ENCODE measurements at regions of chr1 and their contacts with region 1.

Region 1: GRCh38 chr1:242467556-242468145 is 56.8 kb downstream of the PLD5 start:
- DNase-seq: peak; percentile 50
- H3K4me3 ChIP-seq: no peak overlapping the region
- H3K27ac ChIP-seq: no peak overlapping the region
- H3K4me1 ChIP-seq: no peaks in the 10 kb centered on the region
- H3K27me3 ChIP-seq: no peaks in the 10 kb centered on the region
- CTCF ChIP-seq: peak; percentile 81 to 82

Region 2: GRCh38 chr1:242402956-242403355 is 64.7 kb before region 1 on chr1:
- CTCF ChIA-PET with region 1: no interaction called
- dilution Hi-C with region 1: no loop called
- in situ Hi-C with region 1: no loop called
- intact Hi-C with region 1: no loop called
- DNase-seq: no peak
- H3K4me3 ChIP-seq: no peak overlapping the region
- H3K27ac ChIP-seq: no peak overlapping the region
- H3K4me1 ChIP-seq: no peaks in the 10 kb centered on the region
- H3K27me3 ChIP-seq: no peaks in the 10 kb centered on the region
- CTCF ChIP-seq: no peak

Region 3: DNA sequence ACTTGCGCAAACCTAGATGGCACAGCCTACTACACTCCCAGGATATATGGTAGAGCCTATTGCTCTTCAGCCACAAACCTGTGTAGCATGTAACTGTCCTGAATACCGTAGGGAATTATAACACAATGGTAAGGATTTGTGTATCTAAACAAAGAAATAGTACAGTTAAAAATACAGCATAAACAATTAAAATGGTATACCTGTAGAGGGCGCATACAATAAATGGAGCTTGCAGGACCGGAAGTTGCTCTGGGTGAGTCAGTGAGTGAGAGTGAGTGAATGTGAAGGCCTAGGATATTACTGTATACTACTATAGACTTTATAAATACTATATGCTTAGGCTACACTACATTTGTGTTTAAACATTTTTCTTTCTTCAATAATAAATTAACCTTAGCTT is 42.4 kb before region 1 on chr1:
- CTCF ChIA-PET with region 1: no interaction called
- dilution Hi-C with region 1: no loop called
- in situ Hi-C with region 1: no loop called
- intact Hi-C with region 1: no loop called
- DNase-seq: peak; percentile 48
- H3K4me3 ChIP-seq: no peak overlapping the region
- H3K27ac ChIP-seq: no peak overlapping the region
- H3K4me1 ChIP-seq: peaks cover 12% of the 10 kb centered on the region
- H3K27me3 ChIP-seq: no peaks in the 10 kb centered on the region
- CTCF ChIP-seq: peak; percentile 18 to 34

Region 4: GRCh38 chr1:242641461-242641860 is 173.8 kb after region 1 on chr1:
- CTCF ChIA-PET with region 1: no interaction called
- dilution Hi-C with region 1: no loop called
- in situ Hi-C with region 1: no loop called
- intact Hi-C with region 1: loop called (anchors 1 kb)
- DNase-seq: no peak
- H3K4me3 ChIP-seq: no peak overlapping the region
- H3K27ac ChIP-seq: no peak overlapping the region
- H3K4me1 ChIP-seq: no peaks in the 10 kb centered on the region
- H3K27me3 ChIP-seq: no peaks in the 10 kb centered on the region
- CTCF ChIP-seq: no peak

Region 5: DNA sequence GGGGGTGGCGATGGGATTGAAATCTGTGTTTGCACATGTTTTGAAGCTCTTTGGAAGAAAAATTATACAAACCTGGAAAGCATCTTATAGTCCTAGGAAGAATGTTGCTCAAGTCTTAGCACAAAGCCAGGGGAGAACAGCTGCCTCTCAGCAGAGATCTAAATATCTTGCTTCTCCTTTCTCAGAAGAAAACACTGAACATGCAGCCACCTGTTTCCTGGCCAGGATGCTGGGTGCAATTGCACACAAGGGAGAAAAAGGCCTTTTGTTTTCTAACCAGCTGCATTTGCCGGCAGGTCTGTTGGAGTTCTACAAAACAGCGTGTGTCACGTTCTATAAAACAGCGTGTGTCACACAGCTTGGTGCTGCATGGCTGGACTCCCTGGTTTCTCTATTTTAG is 316.4 kb after region 1 on chr1:
- CTCF ChIA-PET with region 1: no interaction called
- dilution Hi-C with region 1: no loop called
- in situ Hi-C with region 1: loop called (anchors 25 kb)
- intact Hi-C with region 1: no loop called
- DNase-seq: peak; percentile 32
- H3K4me3 ChIP-seq: no peak overlapping the region
- H3K27ac ChIP-seq: no peak overlapping the region
- H3K4me1 ChIP-seq: no peaks in the 10 kb centered on the region
- H3K27me3 ChIP-seq: peaks cover 5% of the 10 kb centered on the region
- CTCF ChIP-seq: no peak

Region 6: GRCh38 chr1:243325305-243325890 is 857.7 kb after region 1 on chr1:
- CTCF ChIA-PET with region 1: no interaction called
- dilution Hi-C with region 1: no loop called
- in situ Hi-C with region 1: no loop called
- intact Hi-C with region 1: loop called (anchors 10 kb)
- DNase-seq: peak; percentile 25
- H3K4me3 ChIP-seq: no peak overlapping the region
- H3K27ac ChIP-seq: no peak overlapping the region
- H3K4me1 ChIP-seq: no peaks in the 10 kb centered on the region
- H3K27me3 ChIP-seq: no peaks in the 10 kb centered on the region
- CTCF ChIP-seq: peak; percentile 67 to 74